ENCODE measurements at regions of chr9 and their contacts with region 1.

Region 1: DNA sequence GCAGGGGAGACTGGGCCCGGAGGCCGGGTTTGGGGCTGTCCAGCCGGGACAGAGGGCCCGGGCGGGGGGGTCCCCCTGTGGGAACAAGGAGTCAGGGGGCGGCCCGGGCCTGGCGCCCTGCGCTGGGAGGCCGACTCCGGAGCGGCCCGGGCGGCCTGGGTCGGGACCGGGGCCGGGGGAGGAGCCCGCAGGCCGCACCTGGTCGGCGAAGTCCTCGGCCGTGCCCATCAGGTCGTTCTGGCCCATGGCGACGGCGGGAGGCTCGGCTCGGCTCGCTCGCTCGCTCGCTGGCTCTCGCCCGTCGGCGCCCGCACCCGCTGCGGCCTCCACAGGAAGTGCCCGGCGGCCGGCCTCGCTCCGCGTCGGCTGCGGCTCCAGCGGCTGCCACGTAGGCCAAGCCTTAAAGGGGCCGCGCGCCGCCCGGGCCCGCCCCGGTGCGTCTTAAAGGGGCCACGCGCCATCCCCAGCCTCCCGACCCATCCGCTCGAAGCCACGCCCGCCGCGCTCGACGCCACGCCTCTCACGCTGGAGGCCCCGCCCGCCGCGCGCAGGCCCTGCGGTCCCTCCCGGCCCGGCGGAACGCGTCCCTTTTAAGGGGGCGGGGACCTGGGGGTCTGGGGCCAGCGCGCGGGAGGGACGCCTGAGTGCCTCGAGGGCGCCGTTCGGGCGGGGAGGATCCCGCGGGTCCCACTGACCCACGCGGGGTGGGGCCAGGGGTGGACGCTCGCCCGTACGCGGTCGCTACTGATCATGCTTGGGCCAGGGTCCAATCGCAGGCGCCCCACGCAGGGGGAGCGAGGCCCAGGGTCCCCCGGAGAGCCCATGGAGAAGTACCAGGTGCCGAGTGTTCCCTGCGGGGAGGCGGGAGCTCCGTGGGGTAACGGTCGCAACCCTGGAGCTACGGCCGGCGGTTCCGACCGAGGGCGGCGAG is at the starts of genes STKLD1 and SURF4:
- DNase-seq: peak; percentile 97
- ATAC-seq: peak; percentile 70
- H3K4me3 Mint-ChIP-seq: peak within 1 kb of the TSS; percentile 100
- H3K27ac Mint-ChIP-seq: peak within 1 kb of the TSS; percentile 99
- H3K4me1 Mint-ChIP-seq: peaks cover 35% of the 10 kb centered on the region
- H3K27me3 Mint-ChIP-seq: no peaks in the 10 kb centered on the region
- total RNA-seq, gene STKLD1: 0.40 to 0.82 TPM
- total RNA-seq, gene SURF4: 283 to 349 TPM

Region 2: DNA sequence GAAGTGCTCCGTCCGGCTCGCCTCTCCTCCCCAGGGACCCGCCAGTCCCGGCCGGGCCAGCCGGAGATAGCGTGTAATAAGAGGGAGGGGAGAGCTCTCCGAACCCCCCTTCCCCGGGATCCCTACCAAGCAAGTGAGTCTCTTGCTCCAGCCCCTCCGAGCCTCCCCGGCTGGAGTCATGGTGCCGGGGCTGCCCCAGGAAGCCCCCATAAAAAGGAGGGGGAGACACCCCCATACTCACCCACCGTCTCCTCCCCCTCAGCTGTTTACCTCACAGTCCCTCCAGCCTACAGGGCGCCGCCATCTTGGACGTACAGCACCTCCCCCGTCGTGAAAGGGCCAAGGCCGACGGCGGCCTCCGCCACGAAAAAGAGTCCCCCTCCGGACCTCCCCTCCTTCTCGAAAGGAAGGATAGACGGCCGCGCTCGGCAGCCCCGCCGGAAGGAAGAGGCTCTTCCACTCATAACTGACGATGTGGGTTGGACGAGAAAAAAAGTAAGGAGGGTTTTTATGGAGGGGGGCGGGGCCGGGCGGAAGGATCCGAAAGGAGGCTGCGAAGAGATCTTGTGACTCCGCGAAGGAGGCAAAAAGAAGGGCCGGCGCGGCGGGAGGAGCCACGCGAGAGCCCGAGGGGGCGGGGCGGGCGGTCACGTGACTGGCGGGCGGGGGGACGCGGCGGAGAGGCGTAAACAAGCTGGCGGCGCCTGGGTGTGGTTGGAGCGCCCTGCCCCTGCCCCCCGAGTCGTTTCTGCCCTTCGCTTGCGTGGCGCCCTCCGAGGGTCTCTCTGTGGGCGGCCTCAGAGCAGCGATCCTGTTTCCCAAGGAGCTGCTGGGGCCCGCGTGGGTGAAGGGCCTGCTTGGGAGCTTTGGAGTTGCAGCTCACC is 431.4 kb before region 1 on chr9 and contains the start of gene TSC1:
- CTCF ChIA-PET with region 1: no interaction called
- POLR2A ChIA-PET with region 1: no interaction called
- intact Hi-C with region 1: loop called in 1 of 2 experiments (anchors 1 kb)
- DNase-seq: peak; percentile 99
- ATAC-seq: peak; percentile 91
- H3K4me3 Mint-ChIP-seq: peak within 1 kb of the TSS; percentile 81
- H3K27ac Mint-ChIP-seq: peak within 1 kb of the TSS; percentile 99
- H3K4me1 Mint-ChIP-seq: peaks cover 31% of the 10 kb centered on the region
- H3K27me3 Mint-ChIP-seq: no peaks in the 10 kb centered on the region
- total RNA-seq, gene TSC1: 23.9 to 28.6 TPM

Region 3: GRCh38 chr9:133144137-133144903 is 231.7 kb before region 1 on chr9:
- CTCF ChIA-PET with region 1: interaction called, 4 read pairs
- POLR2A ChIA-PET with region 1: no interaction called
- intact Hi-C with region 1: loop called (anchors 1 to 5 kb)
- DNase-seq: peak; percentile 94
- ATAC-seq: peak; percentile 71
- H3K4me3 Mint-ChIP-seq: peak overlapping the region; percentile 57
- H3K27ac Mint-ChIP-seq: peak overlapping the region; percentile 82
- H3K4me1 Mint-ChIP-seq: peaks cover 62% of the 10 kb centered on the region
- H3K27me3 Mint-ChIP-seq: no peaks in the 10 kb centered on the region

Region 4: GRCh38 chr9:133238851-133239532 is 137.0 kb before region 1 on chr9:
- CTCF ChIA-PET with region 1: no interaction called
- POLR2A ChIA-PET with region 1: no interaction called
- intact Hi-C with region 1: no loop called
- DNase-seq: peak; percentile 88
- ATAC-seq: peak; percentile 97
- H3K4me3 Mint-ChIP-seq: peak overlapping the region; percentile 52
- H3K27ac Mint-ChIP-seq: no peak overlapping the region
- H3K4me1 Mint-ChIP-seq: peaks cover 7% of the 10 kb centered on the region
- H3K27me3 Mint-ChIP-seq: peaks cover 5% of the 10 kb centered on the region

Region 5: GRCh38 chr9:133342069-133342406 is 34.0 kb before region 1 on chr9:
- CTCF ChIA-PET with region 1: interaction called, 10 read pairs
- POLR2A ChIA-PET with region 1: interaction called, 287 read pairs
- intact Hi-C with region 1: loop called in 1 of 2 experiments (anchors 2 kb)
- DNase-seq: no peak
- ATAC-seq: peak; percentile 38
- H3K4me3 Mint-ChIP-seq: no peak overlapping the region
- H3K27ac Mint-ChIP-seq: peak overlapping the region; percentile 58
- H3K4me1 Mint-ChIP-seq: peaks cover 14% of the 10 kb centered on the region
- H3K27me3 Mint-ChIP-seq: no peaks in the 10 kb centered on the region

Region 6: DNA sequence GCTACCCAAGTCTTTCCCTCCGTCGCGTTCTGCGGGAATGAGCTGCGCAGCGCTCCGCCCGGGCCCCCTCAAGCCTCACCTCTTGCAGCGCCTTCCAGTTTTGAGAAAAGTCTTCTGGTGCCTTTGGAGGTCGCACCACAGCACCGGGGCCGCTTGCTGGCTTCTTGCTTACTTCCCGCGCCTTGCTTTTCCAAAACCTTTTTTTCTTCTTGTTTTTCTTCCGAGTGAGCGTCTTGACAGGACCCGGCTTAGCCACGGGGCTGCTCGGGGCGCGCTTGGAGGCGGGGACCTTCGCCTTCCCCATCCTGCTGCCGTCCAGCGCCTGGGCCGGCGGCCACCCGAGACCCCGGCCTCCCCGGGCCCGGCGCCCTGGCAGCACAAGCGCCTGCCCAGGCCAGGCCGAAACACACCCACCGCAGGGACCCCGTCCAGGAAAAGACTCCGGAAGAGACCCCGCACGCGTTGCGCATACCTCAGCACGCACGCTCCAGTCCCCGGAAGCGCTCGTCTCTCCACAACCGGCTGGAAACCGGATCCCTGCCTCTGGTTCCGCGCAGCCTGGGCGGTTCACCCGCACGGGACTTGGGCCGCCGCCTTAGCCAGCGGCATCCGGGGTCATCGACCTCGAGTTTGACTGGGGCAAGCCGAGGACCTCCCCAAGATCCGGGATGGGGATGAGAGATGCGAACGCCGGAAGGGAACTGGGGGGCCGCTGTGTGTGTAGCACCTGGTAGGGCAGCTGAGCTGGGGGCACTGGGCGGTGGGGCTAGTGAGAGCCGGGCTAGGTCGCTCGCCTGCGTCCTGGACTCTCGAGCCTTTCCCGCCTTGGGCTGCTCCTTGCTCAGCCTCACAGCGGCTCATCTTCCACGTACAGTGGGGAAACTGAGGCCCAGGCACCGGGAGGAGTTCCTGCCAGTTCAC is 41.8 kb after region 1 on chr9 and contains the start of gene REXO4:
- CTCF ChIA-PET with region 1: interaction called, 5 read pairs
- POLR2A ChIA-PET with region 1: interaction called, 3 read pairs
- intact Hi-C with region 1: loop called (anchors 1 kb)
- DNase-seq: peak; percentile 92
- ATAC-seq: peak; percentile 87
- H3K4me3 Mint-ChIP-seq: peak within 1 kb of the TSS; percentile 92
- H3K27ac Mint-ChIP-seq: peak within 1 kb of the TSS; percentile 93
- H3K4me1 Mint-ChIP-seq: peaks cover 51% of the 10 kb centered on the region
- H3K27me3 Mint-ChIP-seq: no peaks in the 10 kb centered on the region
- total RNA-seq, gene REXO4: 25.9 to 34.3 TPM

Region 7: GRCh38 chr9:133572821-133573361 is 196.9 kb after region 1 on chr9:
- CTCF ChIA-PET with region 1: no interaction called
- POLR2A ChIA-PET with region 1: no interaction called
- intact Hi-C with region 1: no loop called
- DNase-seq: no peak
- ATAC-seq: no peak
- H3K4me3 Mint-ChIP-seq: no peak overlapping the region
- H3K27ac Mint-ChIP-seq: no peak overlapping the region
- H3K4me1 Mint-ChIP-seq: peaks cover 7% of the 10 kb centered on the region
- H3K27me3 Mint-ChIP-seq: peaks cover 10% of the 10 kb centered on the region

Region 8: GRCh38 chr9:133701862-133702797 is 326.1 kb after region 1 on chr9:
- CTCF ChIA-PET with region 1: no interaction called
- POLR2A ChIA-PET with region 1: no interaction called
- intact Hi-C with region 1: no loop called
- DNase-seq: peak; percentile 88
- ATAC-seq: peak; percentile 87
- H3K4me3 Mint-ChIP-seq: peak overlapping the region; percentile 81
- H3K27ac Mint-ChIP-seq: peak overlapping the region; percentile 97
- H3K4me1 Mint-ChIP-seq: peaks cover 53% of the 10 kb centered on the region
- H3K27me3 Mint-ChIP-seq: no peaks in the 10 kb centered on the region

Region 9: GRCh38 chr9:134024828-134025605 is 649.0 kb after region 1 on chr9 and contains the start of gene BRD3OS:
- CTCF ChIA-PET with region 1: no interaction called
- POLR2A ChIA-PET with region 1: no interaction called
- intact Hi-C with region 1: loop called in 1 of 2 experiments (anchors 1 kb)
- DNase-seq: peak; percentile 96
- ATAC-seq: peak; percentile 91
- H3K4me3 Mint-ChIP-seq: peak within 1 kb of the TSS; percentile 74
- H3K27ac Mint-ChIP-seq: no peak within 1 kb of the TSS
- H3K4me1 Mint-ChIP-seq: peaks cover 4% of the 10 kb centered on the region
- H3K27me3 Mint-ChIP-seq: no peaks in the 10 kb centered on the region
- total RNA-seq, gene BRD3OS: 15.1 to 18.0 TPM

Measured in activated CD4-positive, alpha-beta T cell treated with anti-CD3 and anti-CD28 coated beads for 36 hours (primary cell).